ENCODE measurements at regions of chr4 and their contacts with region 1.

Region 1: GRCh38 chr4:84956014-84956413 is 10.5 kb downstream of the WDFY3 start:
- DNase-seq: no peak
- H3K4me3 ChIP-seq: no peak overlapping the region
- H3K27ac ChIP-seq: peak overlapping the region in 1 of 2 donors; percentile 8
- H3K4me1 ChIP-seq: peaks cover 7 to 35% of the 10 kb centered on the region in 2 donors
- H3K27me3 ChIP-seq: no peaks in the 10 kb centered on the region
- CTCF ChIP-seq: no peak

Region 2: DNA sequence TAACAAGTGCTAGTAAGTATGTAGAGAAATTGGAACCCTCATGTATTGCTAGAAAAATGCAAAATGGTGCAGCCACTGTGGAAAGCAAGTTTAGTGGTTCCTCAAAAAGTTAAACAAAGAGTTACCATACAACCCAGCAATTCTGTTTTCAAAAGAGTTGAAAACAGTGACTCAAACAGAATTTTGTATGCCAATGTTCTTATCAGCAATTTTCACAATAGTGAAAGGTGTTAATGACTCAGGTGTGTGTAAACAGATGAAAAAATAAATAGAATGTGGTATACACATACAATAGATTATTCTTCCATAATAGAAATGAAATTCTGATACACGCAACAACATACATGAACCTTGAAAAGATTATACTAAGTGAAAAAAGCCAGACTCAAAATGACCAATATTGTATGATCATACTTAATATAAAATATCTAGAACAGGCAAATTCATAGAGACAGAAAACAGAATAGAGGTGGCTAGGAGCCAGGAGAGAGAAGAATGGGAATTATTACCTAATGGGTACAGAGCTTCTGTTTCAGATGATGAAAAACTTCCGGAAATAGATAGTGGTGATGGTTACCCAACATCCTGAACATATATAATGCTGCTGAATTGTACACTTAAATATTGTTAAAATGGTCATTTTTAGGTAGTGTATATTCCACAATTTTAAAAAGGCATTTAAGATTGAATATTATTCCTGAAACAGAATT is 41.2 kb before region 1 on chr4:
- intact Hi-C with region 1: loop called (anchors 5 kb)
- DNase-seq: no peak
- H3K4me3 ChIP-seq: no peak overlapping the region
- H3K27ac ChIP-seq: peak overlapping the region; percentile 64 to 68
- H3K4me1 ChIP-seq: peaks cover 8 to 26% of the 10 kb centered on the region in 2 donors
- H3K27me3 ChIP-seq: no peaks in the 10 kb centered on the region
- CTCF ChIP-seq: no peak

Measured in ascending aorta (tissue), 2 donors.